ENCODE measurements at regions of chr10 and their contacts with region 1.

Region 1: DNA sequence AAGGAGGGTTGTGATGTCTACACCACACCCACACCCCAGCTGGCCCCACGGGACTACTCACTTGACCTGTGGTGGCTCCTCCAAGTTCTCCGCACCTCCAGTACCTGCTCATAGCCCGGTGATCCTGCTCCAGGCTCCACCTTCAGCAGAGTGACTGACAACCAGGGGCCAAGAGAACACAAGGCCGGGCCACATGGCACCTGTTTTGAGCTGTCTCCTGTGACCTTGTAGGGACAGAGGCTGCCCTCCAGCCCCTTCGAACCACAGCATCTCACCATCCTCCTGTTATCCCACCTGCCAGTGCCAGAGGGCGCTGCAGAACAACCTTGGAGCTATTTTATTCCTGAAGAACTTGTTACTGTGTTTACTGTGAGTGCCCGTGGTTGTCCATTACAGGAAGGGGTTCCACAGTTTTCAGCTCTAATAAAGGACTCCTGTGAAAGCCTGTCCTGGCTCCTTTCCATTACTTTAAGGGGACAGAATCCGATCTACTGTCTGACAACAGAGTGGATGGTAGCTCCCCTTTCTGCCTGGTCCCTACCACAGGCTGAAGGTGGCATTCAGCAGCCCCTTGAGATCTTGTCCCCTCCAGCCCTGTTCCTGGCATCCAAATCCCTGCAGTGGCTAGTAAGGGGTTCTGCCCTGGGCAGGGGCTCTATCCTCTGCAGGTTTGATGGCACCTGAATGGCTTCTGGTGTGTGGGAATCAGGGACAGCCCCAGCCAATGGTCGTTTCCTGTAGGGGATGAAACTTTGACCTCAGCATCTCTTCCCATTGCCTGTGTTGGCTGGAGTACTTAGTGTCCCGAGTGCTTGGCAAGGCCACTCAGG is 50.8 kb downstream of the C10orf120 start:
- DNase-seq: no peak
- ATAC-seq: peak; percentile 15
- H3K4me3 ChIP-seq: no peak overlapping the region
- H3K27ac ChIP-seq: no peak overlapping the region
- H3K4me1 ChIP-seq: no peaks in the 10 kb centered on the region
- H3K27me3 ChIP-seq: no peaks in the 10 kb centered on the region

Region 2: GRCh38 chr10:122435212-122435827 is 213.5 kb before region 1 on chr10:
- intact Hi-C with region 1: no loop called
- DNase-seq: no peak
- ATAC-seq: no peak
- H3K4me3 ChIP-seq: no peak overlapping the region
- H3K27ac ChIP-seq: no peak overlapping the region
- H3K4me1 ChIP-seq: no peaks in the 10 kb centered on the region
- H3K27me3 ChIP-seq: no peaks in the 10 kb centered on the region

Region 3: GRCh38 chr10:122703439-122704118 is 54.8 kb after region 1 on chr10:
- intact Hi-C with region 1: loop called in 1 of 2 experiments (anchors 1 kb)
- DNase-seq: peak; percentile 73 to 86
- ATAC-seq: peak; percentile 77
- H3K4me3 ChIP-seq: no peak overlapping the region
- H3K27ac ChIP-seq: no peak overlapping the region
- H3K4me1 ChIP-seq: no peaks in the 10 kb centered on the region
- H3K27me3 ChIP-seq: no peaks in the 10 kb centered on the region

Region 4: GRCh38 chr10:122733433-122733832 is 84.6 kb after region 1 on chr10:
- intact Hi-C with region 1: no loop called
- DNase-seq: no peak
- ATAC-seq: no peak
- H3K4me3 ChIP-seq: no peak overlapping the region
- H3K27ac ChIP-seq: no peak overlapping the region
- H3K4me1 ChIP-seq: no peaks in the 10 kb centered on the region
- H3K27me3 ChIP-seq: no peaks in the 10 kb centered on the region

Measured in aorta (tissue), 5 donors.